ENCODE measurements at regions of chr3 and their contacts with region 1.

Region 1: GRCh38 chr3:27900316-27900715 is 178.2 kb upstream of the EOMES start:
- DNase-seq: no peak
- ATAC-seq: no peak
- H3K4me3 ChIP-seq: no peak overlapping the region
- H3K27ac ChIP-seq: no peak overlapping the region
- H3K4me1 ChIP-seq: no peaks in the 10 kb centered on the region
- H3K27me3 ChIP-seq: peaks cover 11% of the 10 kb centered on the region; the same call in 1 of the 2 replicates
- CTCF ChIP-seq: no peak

Region 2: DNA sequence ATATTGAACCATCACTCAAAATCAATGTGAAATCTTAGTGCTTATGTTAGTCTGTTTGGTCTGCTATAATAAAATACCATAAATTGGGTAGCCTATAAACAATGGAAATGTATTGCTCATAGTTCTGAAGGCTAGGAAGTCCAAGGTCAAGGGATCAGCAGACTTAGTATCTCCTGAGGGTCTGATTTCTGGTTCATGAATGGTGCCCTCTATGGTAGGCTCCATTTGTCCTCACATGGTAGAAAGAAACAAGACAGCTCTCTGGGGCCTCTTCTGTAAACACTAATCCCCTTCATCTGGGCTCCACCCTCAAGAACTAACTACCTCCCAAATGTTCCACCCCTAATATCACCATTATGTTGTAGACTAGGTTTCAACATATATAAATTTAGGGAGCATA is 163.2 kb before region 1 on chr3:
- CTCF ChIA-PET with region 1: interaction called, 10 read pairs
- POLR2A ChIA-PET with region 1: no interaction called
- intact Hi-C with region 1: no loop called
- DNase-seq: no peak
- ATAC-seq: no peak
- H3K4me3 ChIP-seq: no peak overlapping the region
- H3K27ac ChIP-seq: no peak overlapping the region
- H3K4me1 ChIP-seq: no peaks in the 10 kb centered on the region
- H3K27me3 ChIP-seq: no peaks in the 10 kb centered on the region
- CTCF ChIP-seq: no peak

Measured in PC-3 (cell line).